ENCODE measurements at regions of chr13 and their contacts with region 1.

Region 1: GRCh38 chr13:99436686-99437416 is 64.4 kb upstream of the TM9SF2 start:
- DNase-seq: peak; percentile 96
- H3K4me3 Mint-ChIP-seq: peak overlapping the region; percentile 51
- H3K27ac Mint-ChIP-seq: peak overlapping the region; percentile 48
- H3K4me1 Mint-ChIP-seq: peaks cover 66% of the 10 kb centered on the region
- H3K27me3 Mint-ChIP-seq: peaks cover 21% of the 10 kb centered on the region

Region 2: DNA sequence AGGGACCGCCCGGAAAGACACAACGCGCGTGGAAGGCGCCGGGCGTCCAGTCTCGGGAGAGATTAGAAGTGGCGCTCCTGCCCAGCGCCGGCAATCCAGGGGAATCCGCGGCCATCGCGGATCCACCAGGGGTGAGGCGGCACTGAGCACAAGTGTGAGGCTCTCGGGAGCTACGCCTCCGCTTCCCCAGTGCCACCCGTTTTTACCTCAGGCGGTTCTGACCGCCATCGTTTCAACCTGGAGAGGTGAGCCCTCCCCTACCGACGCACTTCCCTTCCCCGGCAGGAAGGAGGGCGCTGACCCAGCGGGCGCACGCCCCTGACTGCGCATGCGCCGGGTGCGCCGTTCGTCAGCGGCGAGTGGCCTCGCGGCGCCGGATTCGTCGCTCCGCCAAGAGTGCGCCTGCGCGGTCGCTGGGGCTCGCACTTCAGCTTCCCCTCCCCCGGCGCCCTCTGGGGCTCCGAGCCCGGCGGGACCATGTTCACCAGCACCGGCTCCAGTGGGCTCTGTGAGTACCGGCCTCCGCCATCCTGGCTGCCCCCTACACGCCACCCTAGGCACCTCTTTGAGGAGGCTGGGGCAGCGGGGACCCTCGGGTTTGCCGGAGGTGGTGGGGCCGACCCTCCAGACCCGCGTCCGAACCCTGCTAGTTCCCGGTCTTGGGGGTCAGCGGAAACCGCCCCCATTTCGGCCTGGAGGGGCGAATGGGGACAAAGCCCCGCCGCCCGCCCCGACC is 236.3 kb before region 1 on chr13 and contains the start of gene UBAC2:
- CTCF ChIA-PET with region 1: interaction called, 4 read pairs
- POLR2A ChIA-PET with region 1: interaction called, 15 read pairs
- DNase-seq: peak; percentile 97
- H3K4me3 Mint-ChIP-seq: peak within 1 kb of the TSS; percentile 93
- H3K27ac Mint-ChIP-seq: peak within 1 kb of the TSS; percentile 80
- H3K4me1 Mint-ChIP-seq: peaks cover 50% of the 10 kb centered on the region
- H3K27me3 Mint-ChIP-seq: peaks cover 6% of the 10 kb centered on the region
- total RNA-seq, gene UBAC2: 53.8 to 55.2 TPM

Region 3: DNA sequence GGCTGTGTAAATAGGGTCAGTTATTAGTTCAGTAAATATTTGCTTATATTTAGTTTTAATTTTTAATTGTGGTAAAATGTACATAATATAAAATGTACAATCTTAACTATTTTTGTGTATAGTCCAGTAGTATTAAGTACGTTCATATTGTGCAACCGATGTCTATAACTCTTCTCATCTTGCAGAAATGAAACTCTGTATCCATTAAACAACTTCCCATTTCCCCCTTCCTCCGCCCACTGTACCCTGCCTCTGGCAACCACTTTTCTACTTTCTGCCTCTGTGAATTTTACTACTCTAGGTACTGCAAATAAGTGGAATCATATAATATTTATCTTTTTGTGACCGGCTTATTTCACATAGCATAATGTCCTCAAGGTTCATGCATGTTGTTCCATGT is 211.8 kb before region 1 on chr13:
- CTCF ChIA-PET with region 1: no interaction called
- POLR2A ChIA-PET with region 1: no interaction called
- DNase-seq: no peak
- H3K4me3 Mint-ChIP-seq: no peak overlapping the region
- H3K27ac Mint-ChIP-seq: no peak overlapping the region
- H3K4me1 Mint-ChIP-seq: peaks cover 85% of the 10 kb centered on the region
- H3K27me3 Mint-ChIP-seq: no peaks in the 10 kb centered on the region

Region 4: DNA sequence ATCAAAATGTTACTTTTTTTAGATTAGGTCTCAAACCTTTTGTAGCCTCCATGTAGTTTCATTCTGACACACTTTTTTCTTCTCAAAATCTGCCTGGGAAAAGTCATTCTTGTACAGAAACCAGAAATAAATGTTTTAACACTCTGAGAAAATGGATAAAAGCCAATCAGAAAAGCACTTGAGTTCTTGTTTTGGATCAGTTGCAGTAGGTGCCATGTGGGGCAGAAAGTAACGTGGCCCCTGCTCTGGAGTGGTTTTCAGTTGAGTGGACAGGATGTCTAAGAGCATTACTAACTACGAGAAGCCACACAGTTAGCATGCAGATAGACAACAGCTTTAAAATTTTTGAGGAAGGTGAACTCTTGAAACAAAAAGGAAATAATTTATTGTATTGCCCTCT is 148.8 kb before region 1 on chr13:
- CTCF ChIA-PET with region 1: interaction called, 17 read pairs
- POLR2A ChIA-PET with region 1: interaction called, 3 read pairs
- DNase-seq: peak; percentile 60
- H3K4me3 Mint-ChIP-seq: no peak overlapping the region
- H3K27ac Mint-ChIP-seq: peak overlapping the region; percentile 84
- H3K4me1 Mint-ChIP-seq: peaks cover 73% of the 10 kb centered on the region
- H3K27me3 Mint-ChIP-seq: no peaks in the 10 kb centered on the region

Region 5: DNA sequence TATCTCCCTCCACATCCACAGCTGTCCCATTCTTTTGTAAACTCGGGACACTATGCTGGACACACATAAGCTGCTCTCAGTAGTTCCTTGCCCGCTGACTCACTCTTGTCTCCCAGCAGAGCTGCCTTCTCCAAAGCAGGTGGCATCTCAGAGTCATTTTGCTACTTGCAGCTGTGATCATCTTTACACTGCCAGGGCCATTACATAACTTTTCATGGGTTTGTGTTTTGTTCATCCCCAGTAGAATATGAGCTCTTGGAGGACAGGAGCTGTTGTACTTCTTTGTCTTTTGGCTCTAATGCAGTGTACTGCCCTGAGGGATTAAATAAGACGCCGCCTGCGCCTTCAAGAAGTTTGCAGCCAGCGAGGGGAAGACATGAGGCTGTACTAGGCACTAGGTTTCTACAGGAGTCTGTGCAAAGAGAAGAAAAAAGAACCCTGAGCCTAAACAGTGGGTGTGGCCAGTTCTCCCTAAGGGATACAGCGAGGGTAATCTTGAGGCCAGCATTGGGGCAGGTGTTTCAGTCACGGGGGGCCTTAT is 88.9 kb before region 1 on chr13:
- CTCF ChIA-PET with region 1: interaction called, 10 read pairs
- POLR2A ChIA-PET with region 1: interaction called, 10 read pairs
- DNase-seq: no peak
- H3K4me3 Mint-ChIP-seq: no peak overlapping the region
- H3K27ac Mint-ChIP-seq: no peak overlapping the region
- H3K4me1 Mint-ChIP-seq: peaks cover 47% of the 10 kb centered on the region
- H3K27me3 Mint-ChIP-seq: no peaks in the 10 kb centered on the region

Region 6: GRCh38 chr13:99386911-99387788 is 49.7 kb before region 1 on chr13:
- CTCF ChIA-PET with region 1: interaction called, 101 read pairs
- POLR2A ChIA-PET with region 1: interaction called, 33 read pairs
- DNase-seq: peak; percentile 81
- H3K4me3 Mint-ChIP-seq: no peak overlapping the region
- H3K27ac Mint-ChIP-seq: no peak overlapping the region
- H3K4me1 Mint-ChIP-seq: peaks cover 52% of the 10 kb centered on the region
- H3K27me3 Mint-ChIP-seq: no peaks in the 10 kb centered on the region

Region 7: DNA sequence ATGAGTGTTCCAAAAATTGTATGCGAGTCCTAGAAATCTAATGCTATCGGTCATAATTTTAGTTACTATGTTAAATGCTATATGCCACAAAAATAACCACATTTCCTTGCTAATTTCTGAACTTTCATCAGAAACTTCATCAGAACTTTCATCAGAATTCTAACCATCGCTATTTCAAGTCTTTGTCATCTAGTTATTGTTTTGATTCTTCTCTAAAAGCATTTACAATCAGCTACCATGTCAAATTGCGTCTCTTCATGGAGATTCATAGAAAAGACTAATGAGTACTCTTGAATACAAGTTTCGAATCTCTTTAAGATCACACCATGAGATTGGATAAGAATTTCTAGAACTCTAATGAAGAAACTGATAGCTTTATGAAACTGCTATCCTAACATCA is 11.7 kb after region 1 on chr13:
- CTCF ChIA-PET with region 1: interaction called, 29 read pairs
- POLR2A ChIA-PET with region 1: no interaction called
- DNase-seq: no peak
- H3K4me3 Mint-ChIP-seq: no peak overlapping the region
- H3K27ac Mint-ChIP-seq: no peak overlapping the region
- H3K4me1 Mint-ChIP-seq: peaks cover 46% of the 10 kb centered on the region
- H3K27me3 Mint-ChIP-seq: no peaks in the 10 kb centered on the region

Region 8: GRCh38 chr13:99577934-99578917 is 141.4 kb after region 1 on chr13:
- CTCF ChIA-PET with region 1: no interaction called
- POLR2A ChIA-PET with region 1: no interaction called
- DNase-seq: no peak
- H3K4me3 Mint-ChIP-seq: no peak overlapping the region
- H3K27ac Mint-ChIP-seq: no peak overlapping the region
- H3K4me1 Mint-ChIP-seq: peaks cover 5% of the 10 kb centered on the region
- H3K27me3 Mint-ChIP-seq: peaks cover 2% of the 10 kb centered on the region

Measured in activated CD4-positive, alpha-beta memory T cell treated with anti-CD3 and anti-CD28 coated beads, Interleukin-2, amount 10 ng/mL, durations not matched to agents 7 days and 5 days (primary cell).